Breast epithelium (tissue), 4 donors: ENCODE measurements at regions of chr7 and their contacts with region 1.

Region 1: DNA sequence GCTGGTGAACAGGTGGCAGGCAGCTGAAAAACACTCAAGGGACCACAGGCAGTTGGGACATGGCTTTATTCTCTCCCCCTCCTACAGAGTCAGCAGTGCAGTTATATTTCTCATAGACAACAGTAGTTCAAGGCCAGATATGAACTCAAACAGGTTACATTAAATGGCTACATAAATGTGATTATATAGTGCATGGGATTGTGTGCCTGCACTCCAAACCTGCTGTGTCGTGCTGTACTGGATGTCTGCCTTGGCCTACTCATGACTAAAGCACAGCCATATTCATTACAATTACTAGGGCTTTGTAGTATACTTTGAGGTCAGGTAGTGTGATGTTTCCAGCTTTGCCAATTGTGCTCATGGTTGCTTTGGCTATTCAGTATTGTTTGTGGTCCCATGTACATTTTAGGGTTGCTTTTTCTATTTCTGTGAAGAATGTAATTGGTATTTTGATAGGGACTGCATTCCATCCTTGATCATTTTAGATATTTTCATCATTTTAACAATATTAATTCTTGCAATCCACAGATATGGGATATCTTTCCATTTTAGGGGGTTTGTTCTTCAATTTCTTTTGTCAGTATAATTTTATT is 393.6 kb downstream of the CNTNAP2 start:
- DNase-seq: no peak
- H3K4me3 ChIP-seq: no peak overlapping the region
- H3K27ac ChIP-seq: no peak overlapping the region
- H3K4me1 ChIP-seq: no peaks in the 10 kb centered on the region
- H3K27me3 ChIP-seq: no peaks in the 10 kb centered on the region
- CTCF ChIP-seq: no peak
- POLR2A ChIP-seq: no peak

Region 2: DNA sequence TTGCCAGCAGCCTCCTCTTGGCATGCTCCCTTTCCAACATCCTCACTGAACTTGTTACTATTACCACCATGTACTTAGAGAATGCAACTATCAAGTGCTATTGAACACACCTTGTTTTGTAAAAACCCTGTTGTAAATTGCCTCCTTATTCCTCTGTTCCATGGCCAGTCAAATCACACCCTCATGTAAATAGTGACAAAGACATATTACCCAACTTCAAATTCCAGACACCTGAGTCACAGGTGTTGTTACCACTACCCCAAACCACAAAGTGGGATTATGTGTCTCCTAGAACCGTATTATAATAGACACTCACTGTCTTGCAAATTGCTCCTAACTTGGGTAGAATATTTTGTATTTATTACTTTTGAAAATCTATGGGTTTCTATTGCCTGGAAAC is 1817.2 kb after region 1 on chr7:
- intact Hi-C with region 1: loop called (anchors 5 kb)
- DNase-seq: no peak
- H3K4me3 ChIP-seq: no peak overlapping the region
- H3K27ac ChIP-seq: no peak overlapping the region
- H3K4me1 ChIP-seq: no peaks in the 10 kb centered on the region
- H3K27me3 ChIP-seq: no peaks in the 10 kb centered on the region
- CTCF ChIP-seq: no peak
- POLR2A ChIP-seq: no peak